Mammary epithelial cell (primary cell): ENCODE measurements at regions of chr18 and their contacts with region 1.

Region 1: GRCh38 chr18:12236934-12237832 is 17.0 kb upstream of the CIDEA start:
- DNase-seq: peak; percentile 37
- H3K4me3 ChIP-seq: no peak overlapping the region
- H3K27ac ChIP-seq: no peak overlapping the region
- H3K4me1 ChIP-seq: no peaks in the 10 kb centered on the region
- H3K27me3 ChIP-seq: no peaks in the 10 kb centered on the region
- CTCF ChIP-seq: peak; percentile 74 to 91

Region 2: DNA sequence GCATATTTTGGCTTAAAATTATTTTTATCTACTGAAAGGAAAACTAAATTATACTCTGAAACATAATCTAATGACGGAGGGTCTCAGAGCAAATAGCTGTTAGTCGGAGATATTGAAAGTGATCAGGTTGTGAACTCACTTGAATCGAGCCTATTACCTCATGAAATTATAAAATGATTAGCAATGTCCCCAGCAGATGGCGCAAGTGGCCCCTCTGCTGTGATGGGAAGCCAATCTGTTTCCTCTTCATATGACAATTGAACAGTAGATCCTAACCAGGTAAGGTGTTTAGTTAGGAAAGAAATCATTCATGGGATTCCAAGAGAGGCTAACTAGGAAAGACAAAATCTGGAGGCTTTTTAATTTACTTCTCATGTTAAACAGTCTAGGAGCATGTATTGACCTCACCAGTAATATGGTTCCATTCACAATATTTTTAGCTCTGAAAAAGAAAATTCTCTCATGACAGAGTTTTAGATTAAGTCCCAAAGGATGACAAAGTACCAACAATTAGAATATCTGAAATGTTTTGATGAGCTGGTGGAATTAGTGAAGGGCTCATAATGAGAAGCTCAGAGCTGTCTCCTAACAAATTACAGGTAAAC is 299.2 kb before region 1 on chr18:
- CTCF ChIA-PET with region 1: no interaction called
- dilution Hi-C with region 1: no loop called
- in situ Hi-C with region 1: no loop called
- intact Hi-C with region 1: loop called (anchors 2 kb)
- DNase-seq: peak; percentile 47
- H3K4me3 ChIP-seq: no peak overlapping the region
- H3K27ac ChIP-seq: no peak overlapping the region
- H3K4me1 ChIP-seq: no peaks in the 10 kb centered on the region
- H3K27me3 ChIP-seq: no peaks in the 10 kb centered on the region
- CTCF ChIP-seq: peak; percentile 70 to 83

Region 3: GRCh38 chr18:12068950-12069320 is 168.2 kb before region 1 on chr18:
- CTCF ChIA-PET with region 1: no interaction called
- dilution Hi-C with region 1: no loop called
- in situ Hi-C with region 1: no loop called
- intact Hi-C with region 1: loop called (anchors 1 kb)
- DNase-seq: no peak
- H3K4me3 ChIP-seq: no peak overlapping the region
- H3K27ac ChIP-seq: no peak overlapping the region
- H3K4me1 ChIP-seq: no peaks in the 10 kb centered on the region
- H3K27me3 ChIP-seq: peaks cover 2% of the 10 kb centered on the region
- CTCF ChIP-seq: no peak

Region 4: GRCh38 chr18:12074736-12075135 is 162.4 kb before region 1 on chr18:
- CTCF ChIA-PET with region 1: no interaction called
- dilution Hi-C with region 1: no loop called
- in situ Hi-C with region 1: no loop called
- intact Hi-C with region 1: loop called (anchors 1 kb)
- DNase-seq: no peak
- H3K4me3 ChIP-seq: no peak overlapping the region
- H3K27ac ChIP-seq: no peak overlapping the region
- H3K4me1 ChIP-seq: no peaks in the 10 kb centered on the region
- H3K27me3 ChIP-seq: peaks cover 2% of the 10 kb centered on the region
- CTCF ChIP-seq: peak in 1 of 2 donors; percentile 47